ENCODE measurements at regions of chr7 and their contacts with region 1.

Region 1: DNA sequence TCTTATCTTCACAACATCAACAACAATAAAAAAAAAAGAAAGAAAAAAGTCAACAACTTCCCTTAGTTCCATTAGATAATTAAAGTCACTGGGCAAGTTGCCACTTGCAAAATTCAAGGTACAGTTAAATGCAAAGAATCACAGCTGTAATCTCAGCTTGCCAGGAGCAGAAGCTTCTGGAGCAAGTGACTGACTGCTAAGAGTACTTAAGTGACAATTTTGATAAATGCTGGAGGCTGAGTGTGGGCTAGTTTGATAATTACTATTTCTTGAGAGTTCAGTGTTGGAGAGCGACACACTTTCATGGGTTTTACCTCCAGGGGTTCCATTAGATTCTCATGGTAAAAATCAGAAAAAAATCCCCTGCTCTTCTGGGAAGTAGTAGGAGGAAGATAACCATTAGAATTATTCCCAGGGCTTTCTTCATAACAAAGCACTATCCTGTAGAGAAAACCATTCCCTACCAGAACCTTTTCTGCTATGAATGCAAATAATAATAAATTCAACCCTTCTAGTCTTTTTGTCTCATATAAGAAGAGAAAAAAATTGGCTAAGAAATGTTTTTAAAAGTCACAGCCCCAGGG is 486.3 kb downstream of the POM121L12 start:
- DNase-seq: no peak
- ATAC-seq: no peak

Region 2: DNA sequence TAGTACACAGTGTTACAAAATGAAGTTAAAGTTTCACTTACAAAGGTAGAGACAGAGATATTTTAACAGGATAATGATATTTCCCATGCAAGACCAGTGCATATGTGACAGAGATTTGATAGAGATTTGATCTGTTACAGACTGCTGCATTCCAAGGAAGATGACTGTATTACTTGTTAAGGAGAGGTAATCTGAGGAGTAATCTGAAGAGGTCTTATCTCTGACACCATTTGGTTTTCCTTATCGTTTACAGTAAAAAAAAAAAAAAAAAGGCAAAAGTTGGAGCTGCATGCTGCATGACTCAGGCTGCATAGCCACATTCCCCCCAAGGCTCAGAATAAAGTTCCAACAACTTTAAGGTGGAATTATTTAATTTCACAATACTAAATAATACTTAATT is 196.6 kb before region 1 on chr7:
- intact Hi-C with region 1: no loop called
- DNase-seq: no peak
- ATAC-seq: no peak

Region 3: GRCh38 chr7:53485354-53485753 is 36.3 kb before region 1 on chr7:
- intact Hi-C with region 1: loop called in 1 of 2 experiments (anchors 2 kb)
- DNase-seq: no peak
- ATAC-seq: no peak

Region 4: GRCh38 chr7:53690411-53690810 is 168.7 kb after region 1 on chr7:
- intact Hi-C with region 1: no loop called
- DNase-seq: no peak
- ATAC-seq: no peak

Measured in left colon (tissue), 2 donors.